ENCODE measurements at regions of chr6 and their contacts with region 1.

Region 1: GRCh38 chr6:43477235-43478007 is at the start of gene TJAP1:
- DNase-seq: peak; percentile 98
- ATAC-seq: peak; percentile 100
- H3K4me3 Mint-ChIP-seq: peak within 1 kb of the TSS; percentile 96
- H3K27ac Mint-ChIP-seq: peak within 1 kb of the TSS; percentile 94
- H3K4me1 Mint-ChIP-seq: peaks cover 41% of the 10 kb centered on the region
- H3K27me3 Mint-ChIP-seq: no peaks in the 10 kb centered on the region
- CTCF ChIP-seq: no peak
- total RNA-seq, gene TJAP1: 36.0 and 45.3 TPM in 2 replicates

Region 2: GRCh38 chr6:43247113-43247999 is 230.1 kb before region 1 on chr6:
- CTCF ChIA-PET with region 1: no interaction called
- POLR2A ChIA-PET with region 1: interaction called, 4 read pairs
- intact Hi-C with region 1: loop called (anchors 1 kb)
- DNase-seq: peak; percentile 73
- ATAC-seq: peak; percentile 96
- H3K4me3 Mint-ChIP-seq: no peak overlapping the region
- H3K27ac Mint-ChIP-seq: peak overlapping the region; percentile 76
- H3K4me1 Mint-ChIP-seq: peaks cover 29% of the 10 kb centered on the region
- H3K27me3 Mint-ChIP-seq: peaks cover 17% of the 10 kb centered on the region
- CTCF ChIP-seq: no peak

Region 3: DNA sequence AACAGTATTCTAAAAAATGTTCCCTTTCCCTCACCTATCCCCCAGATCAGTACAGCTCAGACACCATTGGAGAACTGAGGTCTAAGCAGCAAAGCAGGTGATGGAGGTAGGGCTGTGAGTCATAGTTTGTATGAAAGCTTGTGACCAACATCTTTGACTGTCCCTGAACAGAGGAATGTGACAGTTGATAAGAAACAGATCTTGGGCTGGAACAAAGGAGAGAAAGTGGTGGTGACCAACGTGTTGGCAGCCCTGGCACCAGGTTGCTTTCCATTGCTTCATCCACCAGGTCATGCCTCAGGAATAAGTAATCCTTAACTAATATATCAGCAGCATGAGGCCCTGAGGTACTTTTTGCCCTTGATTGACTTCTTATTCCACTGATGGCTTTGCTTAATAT is 148.9 kb before region 1 on chr6:
- CTCF ChIA-PET with region 1: no interaction called
- POLR2A ChIA-PET with region 1: no interaction called
- intact Hi-C with region 1: no loop called
- DNase-seq: no peak
- ATAC-seq: no peak
- H3K4me3 Mint-ChIP-seq: no peak overlapping the region
- H3K27ac Mint-ChIP-seq: peak overlapping the region; percentile 31
- H3K4me1 Mint-ChIP-seq: peaks cover 32% of the 10 kb centered on the region
- H3K27me3 Mint-ChIP-seq: no peaks in the 10 kb centered on the region
- CTCF ChIP-seq: no peak

Region 4: GRCh38 chr6:43454696-43455530 is 22.5 kb before region 1 on chr6:
- CTCF ChIA-PET with region 1: interaction called, 3 read pairs
- POLR2A ChIA-PET with region 1: interaction called, 6 read pairs
- intact Hi-C with region 1: loop called (anchors 1 kb)
- DNase-seq: peak; percentile 72
- ATAC-seq: peak; percentile 49
- H3K4me3 Mint-ChIP-seq: peak overlapping the region; percentile 85
- H3K27ac Mint-ChIP-seq: no peak overlapping the region
- H3K4me1 Mint-ChIP-seq: peaks cover 16% of the 10 kb centered on the region
- H3K27me3 Mint-ChIP-seq: no peaks in the 10 kb centered on the region
- CTCF ChIP-seq: no peak

Region 5: DNA sequence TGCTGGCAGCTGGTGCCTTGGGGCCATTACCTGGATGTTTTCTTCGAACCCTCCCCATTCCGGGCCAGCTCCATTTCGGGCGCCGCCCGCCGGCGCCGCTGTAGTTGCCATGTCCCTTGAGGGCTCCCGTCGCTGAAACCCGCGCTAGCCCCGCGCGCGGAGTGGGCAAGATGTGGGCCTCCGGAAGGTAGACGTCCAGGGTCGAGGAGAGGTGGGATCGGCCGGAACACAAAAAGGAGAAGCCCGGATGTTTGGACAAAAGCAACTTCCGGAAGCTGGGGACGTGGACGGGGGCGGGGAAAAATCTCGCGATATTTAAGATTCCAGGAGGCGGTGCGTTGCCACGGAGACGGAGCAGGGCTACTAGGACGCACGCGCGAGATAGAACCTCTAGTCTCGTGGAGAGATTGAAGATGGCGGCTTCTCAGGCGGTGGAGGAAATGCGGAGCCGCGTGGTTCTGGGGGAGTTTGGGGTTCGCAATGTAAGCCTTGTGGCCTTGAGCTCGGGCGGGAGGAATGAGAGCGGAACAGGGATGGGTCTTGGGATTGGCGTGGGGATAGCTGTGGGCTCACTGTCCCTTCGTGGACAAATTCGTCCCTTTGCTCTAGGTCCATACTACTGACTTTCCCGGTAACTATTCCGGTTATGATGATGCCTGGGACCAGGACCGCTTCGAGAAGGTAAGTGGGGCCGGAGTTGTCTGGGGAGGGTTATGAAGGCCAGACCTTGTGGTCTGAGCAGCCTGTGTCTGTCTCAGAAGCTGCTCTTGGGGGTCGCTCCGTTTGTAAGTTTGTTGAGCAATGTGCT is 39.5 kb after region 1 on chr6 and contains the starts of genes POLR1C and YIPF3:
- CTCF ChIA-PET with region 1: no interaction called
- POLR2A ChIA-PET with region 1: interaction called, 11 read pairs
- intact Hi-C with region 1: loop called (anchors 1 kb)
- DNase-seq: peak; percentile 87
- ATAC-seq: peak; percentile 94
- H3K4me3 Mint-ChIP-seq: no peak within 1 kb of the TSS
- H3K27ac Mint-ChIP-seq: peak within 1 kb of the TSS; percentile 54
- H3K4me1 Mint-ChIP-seq: peaks cover 29% of the 10 kb centered on the region
- H3K27me3 Mint-ChIP-seq: no peaks in the 10 kb centered on the region
- CTCF ChIP-seq: no peak
- total RNA-seq, gene POLR1C: 67.7 and 75.6 TPM in 2 replicates
- total RNA-seq, gene YIPF3: 51.7 and 59.1 TPM in 2 replicates

Measured in activated B cell treated with CpG ODN at 0.5 μM for 24 hours (primary cell).